Adrenal gland (tissue), 19 donors: ENCODE measurements at regions of chr22 and their contacts with region 1.

Region 1: GRCh38 chr22:49930739-49931412 is 12.4 kb downstream of the CRELD2 start:
- DNase-seq: peak; percentile 68 to 91 (median 82)
- H3K4me3 ChIP-seq: no peak overlapping the region
- H3K27ac ChIP-seq: peak overlapping the region in 1 of 5 donors; percentile 43
- H3K4me1 ChIP-seq: peaks cover 18 to 32% of the 10 kb centered on the region in 2 donors
- H3K27me3 ChIP-seq: peaks cover 6% of the 10 kb centered on the region
- CTCF ChIP-seq: peak; percentile 19 to 73 (median 60)
- POLR2A ChIP-seq: no peak

Region 2: DNA sequence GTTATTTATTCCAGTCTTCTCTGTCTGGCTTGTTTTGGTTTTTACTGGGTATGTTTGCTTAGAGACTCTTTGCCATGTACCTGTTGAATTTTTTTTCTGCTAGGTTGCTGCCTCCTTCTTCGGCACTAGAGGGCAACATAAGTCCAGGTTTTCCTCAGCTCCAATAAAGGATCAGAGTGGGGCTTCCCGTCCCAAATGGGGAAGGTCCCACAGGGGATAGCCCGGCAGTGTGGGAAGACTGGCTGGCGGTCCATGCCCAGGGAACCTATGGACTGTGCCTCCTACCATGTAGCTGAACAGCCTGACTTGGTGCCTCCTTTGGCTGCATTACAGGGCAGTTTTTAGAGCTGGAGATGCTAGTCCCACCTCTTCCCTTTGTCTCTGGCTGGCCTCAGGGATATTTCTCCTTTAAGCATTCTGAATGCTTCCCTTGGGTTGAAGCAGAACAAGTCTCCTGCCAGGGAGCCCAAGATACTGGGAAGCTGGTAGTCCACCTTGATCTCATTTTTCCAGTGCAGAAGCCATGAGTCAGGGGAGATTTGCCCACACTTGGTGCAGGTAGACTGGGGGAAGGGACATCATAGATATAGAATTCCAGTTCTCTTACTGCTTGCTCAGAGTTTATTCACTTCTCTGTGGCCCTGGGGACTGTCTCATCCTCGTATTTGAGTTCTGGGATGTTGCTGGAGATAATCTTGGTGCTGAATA is 163.4 kb before region 1 on chr22:
- intact Hi-C with region 1: loop called in 1 of 2 experiments (anchors 10 kb)
- DNase-seq: peak in 3 of 7 donors; percentile 23 to 51 (median 33)
- H3K4me3 ChIP-seq: no peak overlapping the region
- H3K27ac ChIP-seq: no peak overlapping the region
- H3K4me1 ChIP-seq: peaks cover 0 to 5% of the 10 kb centered on the region in 2 donors
- H3K27me3 ChIP-seq: no peaks in the 10 kb centered on the region
- CTCF ChIP-seq: peak in 5 of 6 experiments; percentile 49 to 72 (median 71)
- POLR2A ChIP-seq: no peak

Region 3: GRCh38 chr22:49838771-49839717 is 91.8 kb before region 1 on chr22:
- intact Hi-C with region 1: no loop called
- DNase-seq: no peak
- H3K4me3 ChIP-seq: no peak overlapping the region
- H3K27ac ChIP-seq: no peak overlapping the region
- H3K4me1 ChIP-seq: no peaks in the 10 kb centered on the region
- H3K27me3 ChIP-seq: peaks cover 11% of the 10 kb centered on the region
- CTCF ChIP-seq: no peak
- POLR2A ChIP-seq: no peak

Region 4: GRCh38 chr22:49970528-49971231 is 39.8 kb after region 1 on chr22:
- intact Hi-C with region 1: no loop called
- DNase-seq: peak; percentile 96 to 99 (median 99)
- H3K4me3 ChIP-seq: peak overlapping the region in 2 of 4 donors; percentile 26 to 53
- H3K27ac ChIP-seq: peak overlapping the region; percentile 65 to 96 (median 94)
- H3K4me1 ChIP-seq: peaks cover 47 to 56% of the 10 kb centered on the region in 2 donors
- H3K27me3 ChIP-seq: no peaks in the 10 kb centered on the region
- CTCF ChIP-seq: no peak
- POLR2A ChIP-seq: peak; percentile 88 to 98

Region 5: GRCh38 chr22:49992921-49993648 is 62.2 kb after region 1 on chr22:
- intact Hi-C with region 1: loop called (anchors 5 to 10 kb)
- DNase-seq: peak; percentile 49 to 77 (median 70)
- H3K4me3 ChIP-seq: no peak overlapping the region
- H3K27ac ChIP-seq: no peak overlapping the region
- H3K4me1 ChIP-seq: peaks cover 0 to 6% of the 10 kb centered on the region in 2 donors
- H3K27me3 ChIP-seq: no peaks in the 10 kb centered on the region
- CTCF ChIP-seq: peak; percentile 34 to 80 (median 66)
- POLR2A ChIP-seq: no peak

Region 6: GRCh38 chr22:50030297-50031188 is 99.7 kb after region 1 on chr22:
- intact Hi-C with region 1: loop called (anchors 2 kb)
- DNase-seq: peak; percentile 57 to 82 (median 76)
- H3K4me3 ChIP-seq: no peak overlapping the region
- H3K27ac ChIP-seq: no peak overlapping the region
- H3K4me1 ChIP-seq: no peaks in the 10 kb centered on the region
- H3K27me3 ChIP-seq: no peaks in the 10 kb centered on the region
- CTCF ChIP-seq: peak; percentile 74 to 94 (median 88)
- POLR2A ChIP-seq: no peak

Region 7: DNA sequence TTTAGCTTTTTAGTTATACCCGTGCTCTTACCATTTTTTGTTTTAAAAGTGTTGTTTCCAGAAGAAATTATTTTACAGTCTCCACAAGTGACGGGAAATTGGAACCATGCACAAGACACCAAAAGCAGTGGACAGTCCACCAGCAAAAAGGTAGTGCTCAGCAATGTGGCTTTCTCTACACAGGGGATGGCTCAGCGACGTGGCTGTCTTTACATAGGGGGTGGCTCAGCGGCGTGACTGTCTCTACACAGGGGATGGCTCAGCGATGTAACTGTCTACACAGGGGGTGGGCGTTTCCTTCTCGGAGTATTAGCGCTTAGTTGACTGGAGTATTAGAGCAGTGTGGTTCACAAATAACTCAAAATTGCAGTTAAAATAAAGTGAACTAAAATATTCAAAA is 203.6 kb after region 1 on chr22:
- intact Hi-C with region 1: loop called in 1 of 2 experiments (anchors 5 kb)
- DNase-seq: no peak
- H3K4me3 ChIP-seq: no peak overlapping the region
- H3K27ac ChIP-seq: no peak overlapping the region
- H3K4me1 ChIP-seq: no peaks in the 10 kb centered on the region
- H3K27me3 ChIP-seq: no peaks in the 10 kb centered on the region
- CTCF ChIP-seq: no peak
- POLR2A ChIP-seq: no peak